Right ventricle myocardium inferior (tissue), 1 donor: ENCODE measurements at regions of chr20 and their contacts with region 1.

Region 1: DNA sequence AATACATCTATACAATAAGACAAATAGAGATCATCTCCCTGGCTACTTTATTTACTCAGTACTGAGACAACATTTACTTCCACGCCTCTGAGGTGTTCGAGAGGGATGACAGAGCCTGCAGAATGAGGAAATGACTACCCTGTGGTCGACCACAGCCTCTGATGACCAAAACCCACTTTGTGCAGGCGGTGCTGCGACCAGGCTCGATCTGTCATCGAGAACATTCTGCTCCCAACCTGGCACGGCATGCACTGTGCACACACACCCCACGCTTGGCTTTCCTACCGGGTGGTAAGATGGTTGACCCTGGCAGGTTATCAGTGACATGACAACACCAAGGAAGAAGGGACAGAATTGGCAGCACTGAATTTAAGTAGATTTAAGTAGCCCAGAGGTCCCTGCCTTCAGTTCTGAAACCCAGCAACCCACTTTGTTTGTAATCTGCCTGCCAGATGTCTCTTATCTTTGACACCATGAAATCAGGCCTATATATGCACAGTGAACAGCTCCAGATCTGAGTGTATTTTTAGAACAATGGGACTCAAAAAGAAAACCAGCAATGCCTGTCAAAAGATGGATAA is 42.6 kb downstream of the TTI1 start:
- DNase-seq: peak; percentile 86
- ATAC-seq: peak; percentile 72

Region 2: DNA sequence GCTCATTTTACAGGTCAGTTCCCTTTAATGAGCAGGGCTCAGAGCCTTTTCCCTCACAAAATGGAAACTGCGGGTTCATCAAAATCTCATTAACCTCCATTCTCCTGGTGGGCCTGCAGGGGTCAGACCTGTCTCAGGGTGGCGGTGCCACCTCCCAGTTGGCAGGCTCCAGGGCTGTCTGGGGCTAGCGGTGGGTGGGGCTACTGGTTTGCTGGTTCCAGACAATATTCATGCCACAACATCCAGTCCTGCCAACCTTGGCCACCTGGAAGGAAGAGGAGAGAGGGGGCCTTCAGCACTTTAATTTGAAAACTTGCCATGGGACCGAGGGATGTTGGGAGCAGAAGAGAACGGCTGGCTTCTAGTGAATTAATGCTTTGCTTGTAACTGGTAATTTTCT is 338.7 kb before region 1 on chr20:
- intact Hi-C with region 1: loop called (anchors 1 kb)
- DNase-seq: no peak
- ATAC-seq: peak; percentile 84

Region 3: DNA sequence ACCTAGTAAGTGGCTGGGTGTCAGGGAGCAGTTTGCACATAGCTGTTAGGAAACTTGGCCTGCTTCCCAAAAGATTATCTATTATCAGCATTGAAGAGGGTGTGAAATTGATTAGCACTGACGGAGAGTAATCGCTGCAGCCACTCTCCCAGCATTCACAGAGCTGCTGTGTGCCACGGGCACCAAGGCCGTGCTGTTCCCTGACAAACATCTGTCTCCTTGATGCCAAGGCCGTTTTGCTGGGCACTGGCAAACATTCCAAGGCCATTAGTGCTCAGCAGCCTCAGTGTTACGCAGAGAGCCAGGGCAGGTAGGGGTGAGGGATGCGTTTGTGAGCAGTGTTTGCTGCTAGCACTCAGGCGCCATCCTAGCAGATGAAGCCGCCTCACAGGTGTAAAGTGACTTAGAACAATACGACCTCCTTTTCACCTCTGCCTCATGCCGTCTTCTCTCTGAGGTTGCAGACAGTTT is 145.4 kb before region 1 on chr20:
- intact Hi-C with region 1: loop called (anchors 5 kb)
- DNase-seq: peak; percentile 69
- ATAC-seq: peak; percentile 87

Region 4: DNA sequence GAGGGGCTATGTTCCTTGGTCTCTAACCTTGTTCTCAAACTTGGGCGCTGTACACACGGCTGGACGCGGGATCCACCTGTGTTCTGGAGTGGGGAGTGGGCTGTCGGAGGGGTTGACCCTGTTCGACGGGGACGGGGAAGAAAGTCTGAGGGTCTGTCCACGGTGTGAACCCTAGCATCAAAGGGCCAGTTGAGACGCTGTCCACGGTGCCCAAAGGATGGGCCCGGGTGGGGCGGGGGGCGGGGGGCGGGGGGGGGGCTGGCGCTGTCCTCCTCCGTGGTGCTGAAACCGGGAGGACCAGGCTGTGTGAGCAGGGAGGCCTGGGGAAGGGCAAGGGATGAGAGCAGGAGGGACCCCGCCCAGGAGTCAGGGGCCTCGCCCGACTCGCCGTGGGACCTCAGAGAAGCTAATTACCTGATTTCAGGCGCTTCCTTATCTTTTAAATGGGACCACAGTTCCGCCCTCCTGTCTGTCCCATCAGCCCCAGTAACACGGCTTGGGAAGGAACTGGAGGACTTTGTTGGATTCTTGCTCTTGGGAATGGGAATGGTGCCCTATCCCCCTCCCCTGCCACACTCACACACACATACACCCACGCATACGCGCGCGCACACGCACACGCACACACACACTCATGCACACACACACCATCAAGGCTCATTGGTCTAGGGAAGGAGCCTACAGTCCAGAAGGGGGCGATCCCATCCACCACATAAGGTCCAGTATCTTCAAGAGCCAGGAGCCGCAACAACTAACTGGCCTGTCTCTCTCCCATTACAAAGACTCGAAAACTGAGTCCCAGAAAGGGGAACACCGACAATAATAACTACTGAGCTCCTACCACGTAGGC is 88.8 kb before region 1 on chr20:
- intact Hi-C with region 1: loop called (anchors 5 kb)
- DNase-seq: no peak
- ATAC-seq: peak; percentile 51

Region 5: GRCh38 chr20:38057351-38057972 is 66.8 kb after region 1 on chr20:
- intact Hi-C with region 1: no loop called
- DNase-seq: peak; percentile 95
- ATAC-seq: peak; percentile 90

Region 6: GRCh38 chr20:38073307-38074071 is 82.8 kb after region 1 on chr20:
- intact Hi-C with region 1: no loop called
- DNase-seq: no peak
- ATAC-seq: peak; percentile 87